ENCODE measurements at regions of chr11 and their contacts with region 1.

Region 1: GRCh38 chr11:47932544-47932943 is 47.8 kb upstream of the PTPRJ start:
- DNase-seq: no peak

Region 2: DNA sequence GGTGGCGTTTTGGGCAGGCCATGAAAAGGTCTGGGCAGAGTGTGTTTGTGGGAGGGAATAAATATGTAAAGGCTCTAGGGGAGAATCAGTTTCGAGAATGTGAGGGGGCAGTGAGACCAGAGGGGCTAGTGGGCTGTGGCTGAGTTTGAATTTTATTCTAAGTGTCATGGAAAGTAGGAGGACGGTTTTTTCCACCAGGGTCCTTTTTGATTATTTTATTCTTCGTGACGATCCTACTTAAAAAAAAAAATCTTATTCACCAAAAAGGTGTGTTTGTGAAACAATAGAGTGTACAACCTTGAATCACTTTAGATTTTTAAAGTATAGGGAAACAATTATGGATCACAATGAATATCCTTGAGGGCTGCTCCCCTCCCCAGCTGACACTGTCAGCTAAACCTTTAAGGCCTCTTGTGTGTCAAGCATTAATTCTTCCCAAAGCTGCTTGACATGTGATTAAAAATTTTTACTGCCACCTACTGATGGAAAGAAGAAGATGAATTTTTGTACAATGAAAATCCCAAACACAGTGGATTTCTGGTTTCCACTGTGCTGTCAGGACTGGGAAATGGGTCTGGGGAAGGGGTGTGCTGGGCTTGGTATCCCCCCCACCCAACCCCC is 176.6 kb after region 1 on chr11:
- intact Hi-C with region 1: loop called (anchors 2 kb)
- DNase-seq: peak in 2 of 42 donors; percentile 10 to 44

Measured in head of caudate nucleus (tissue), 42 donors.